GM12878 (cell line): ENCODE measurements at regions of chr5 and their contacts with region 1.

Region 1: GRCh38 chr5:56328753-56329560 is 95.8 kb upstream of the ANKRD55 start:
- DNase-seq: peak; percentile 78
- ATAC-seq: peak; percentile 82
- H3K4me3 ChIP-seq: peak overlapping the region; percentile 14; the same call in 1 of the 2 replicates
- H3K27ac ChIP-seq: peak overlapping the region; percentile 59
- H3K4me1 ChIP-seq: peaks cover 21% of the 10 kb centered on the region
- H3K27me3 ChIP-seq: no peaks in the 10 kb centered on the region
- CTCF ChIP-seq: no peak
- EP300 ChIP-seq: peak in 1 of 2 experiments; percentile 70; a peak in 1 of 4 replicates
- POLR2A ChIP-seq: no peak
- RAD21 ChIP-seq: no peak

Region 2: DNA sequence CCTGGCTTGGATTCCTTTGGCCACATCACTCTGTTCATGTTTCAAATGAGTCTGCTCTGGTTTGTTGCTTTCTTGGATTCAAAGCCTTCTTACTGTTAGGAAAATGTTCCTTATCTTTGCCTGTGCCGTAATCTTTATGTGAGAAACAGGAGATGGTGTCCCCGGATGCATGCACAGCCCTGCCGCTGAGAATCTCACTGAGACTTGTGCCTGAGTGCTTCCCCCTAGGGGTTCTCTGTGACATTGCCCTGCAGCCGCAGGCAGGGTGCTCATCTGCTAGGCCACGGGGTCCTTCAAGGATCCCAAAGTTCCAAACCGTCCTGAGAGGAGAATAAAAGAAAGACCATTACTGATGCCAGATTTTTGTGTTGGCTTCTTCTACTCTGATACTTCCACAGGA is 14.4 kb before region 1 on chr5:
- CTCF ChIA-PET with region 1: interaction called, 45 read pairs
- POLR2A ChIA-PET with region 1: interaction called, 7 read pairs
- RAD21 ChIA-PET with region 1: interaction called, 33 read pairs
- SMC1A ChIA-PET with region 1: interaction called, 59 read pairs
- in situ Hi-C with region 1: no loop called
- intact Hi-C with region 1: no loop called
- DNase-seq: no peak
- ATAC-seq: peak; percentile 85
- H3K4me3 ChIP-seq: no peak overlapping the region
- H3K27ac ChIP-seq: no peak overlapping the region
- H3K4me1 ChIP-seq: peaks cover 15% of the 10 kb centered on the region
- H3K27me3 ChIP-seq: no peaks in the 10 kb centered on the region
- CTCF ChIP-seq: peak; percentile 62 to 96 (median 91)
- EP300 ChIP-seq: no peak
- POLR2A ChIP-seq: no peak
- RAD21 ChIP-seq: peak; percentile 64

Region 3: GRCh38 chr5:56340196-56340980 is 11.4 kb after region 1 on chr5:
- CTCF ChIA-PET with region 1: interaction called, 10 read pairs
- POLR2A ChIA-PET with region 1: no interaction called
- RAD21 ChIA-PET with region 1: no interaction called
- SMC1A ChIA-PET with region 1: interaction called, 11 read pairs
- in situ Hi-C with region 1: no loop called
- intact Hi-C with region 1: no loop called
- DNase-seq: no peak
- ATAC-seq: no peak
- H3K4me3 ChIP-seq: no peak overlapping the region
- H3K27ac ChIP-seq: no peak overlapping the region
- H3K4me1 ChIP-seq: no peaks in the 10 kb centered on the region
- H3K27me3 ChIP-seq: no peaks in the 10 kb centered on the region
- CTCF ChIP-seq: no peak
- EP300 ChIP-seq: no peak
- POLR2A ChIP-seq: no peak
- RAD21 ChIP-seq: no peak

Region 4: GRCh38 chr5:56415356-56415765 is 86.4 kb after region 1 on chr5:
- CTCF ChIA-PET with region 1: interaction called, 9 read pairs
- POLR2A ChIA-PET with region 1: interaction called, 7 read pairs
- RAD21 ChIA-PET with region 1: interaction called, 111 read pairs
- SMC1A ChIA-PET with region 1: interaction called, 57 read pairs
- in situ Hi-C with region 1: no loop called
- intact Hi-C with region 1: loop called (anchors 1 kb)
- DNase-seq: peak; percentile 92
- ATAC-seq: peak; percentile 84
- H3K4me3 ChIP-seq: peak overlapping the region; percentile 48; the same call in 1 of the 2 replicates
- H3K27ac ChIP-seq: peak overlapping the region; percentile 79
- H3K4me1 ChIP-seq: peaks cover 40% of the 10 kb centered on the region
- H3K27me3 ChIP-seq: no peaks in the 10 kb centered on the region
- CTCF ChIP-seq: no peak
- EP300 ChIP-seq: peak in 1 of 2 experiments; percentile 39; a peak in 2 of 4 replicates
- POLR2A ChIP-seq: 0 out of 2 replicates have a peak, but pooled peaks have one; percentile 26
- RAD21 ChIP-seq: 0 out of 2 replicates have a peak, but pooled peaks have one; percentile 10

Region 5: DNA sequence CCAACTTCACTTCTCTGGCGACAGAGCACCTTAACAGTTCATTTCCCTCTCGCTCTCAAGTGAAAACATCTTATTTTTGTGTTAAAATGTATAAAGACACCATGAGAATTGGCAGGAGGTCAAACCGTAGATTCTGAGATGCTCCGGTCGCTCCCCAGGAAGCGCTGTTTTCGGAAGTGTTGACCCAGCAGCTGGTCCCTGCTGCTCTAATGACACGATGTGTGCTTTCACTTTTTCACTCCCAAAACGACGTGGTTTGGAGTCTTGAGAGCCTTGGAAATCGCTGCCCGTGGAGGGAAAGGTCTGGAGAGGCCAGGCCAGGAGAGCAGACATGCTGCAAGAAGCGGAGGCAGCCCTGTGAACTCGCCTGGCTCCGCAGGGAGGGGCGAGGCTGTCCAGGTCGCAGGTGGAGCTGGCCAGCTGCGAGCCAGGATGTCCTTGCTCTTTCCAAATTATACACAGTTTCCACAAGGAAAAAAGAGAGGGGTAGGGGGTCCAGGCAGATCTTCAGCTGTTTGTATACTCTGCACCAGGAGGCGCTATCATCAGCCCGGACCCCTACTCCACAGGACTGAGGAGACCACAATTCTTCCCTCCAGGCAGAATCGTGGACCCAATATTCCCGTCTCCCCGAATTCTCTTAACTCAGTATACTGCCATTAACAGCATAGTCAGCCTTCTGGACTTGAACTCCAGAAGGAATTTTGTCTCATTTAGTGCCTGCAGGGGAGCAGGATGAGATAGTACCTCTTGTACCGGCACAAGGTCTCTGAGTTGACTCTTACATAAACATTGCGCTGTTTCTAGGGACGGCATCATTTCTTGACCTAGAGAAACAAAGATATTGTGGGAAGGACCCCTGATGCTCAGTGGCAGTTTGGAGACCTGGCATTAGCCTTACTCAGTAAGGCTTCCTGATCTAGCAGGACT is 152.7 kb after region 1 on chr5:
- CTCF ChIA-PET with region 1: no interaction called
- POLR2A ChIA-PET with region 1: no interaction called
- RAD21 ChIA-PET with region 1: interaction called, 16 read pairs
- SMC1A ChIA-PET with region 1: interaction called, 5 read pairs
- in situ Hi-C with region 1: no loop called
- intact Hi-C with region 1: loop called (anchors 1 kb)
- DNase-seq: peak; percentile 23
- ATAC-seq: peak; percentile 58
- H3K4me3 ChIP-seq: peak overlapping the region; percentile 87
- H3K27ac ChIP-seq: peak overlapping the region; percentile 4; the same call in 1 of the 2 replicates
- H3K4me1 ChIP-seq: peaks cover 24% of the 10 kb centered on the region
- H3K27me3 ChIP-seq: no peaks in the 10 kb centered on the region
- CTCF ChIP-seq: peak; percentile 15 to 31 (median 26); a peak in 2 of 6 replicates
- EP300 ChIP-seq: no peak
- POLR2A ChIP-seq: no peak
- RAD21 ChIP-seq: peak; percentile 32; the same call in 1 of the 2 replicates

Region 6: GRCh38 chr5:56681346-56681745 is 352.4 kb after region 1 on chr5:
- CTCF ChIA-PET with region 1: interaction called, 3 read pairs
- POLR2A ChIA-PET with region 1: no interaction called
- RAD21 ChIA-PET with region 1: interaction called, 6 read pairs
- SMC1A ChIA-PET with region 1: interaction called, 3 read pairs
- in situ Hi-C with region 1: no loop called
- intact Hi-C with region 1: loop called (anchors 5 kb)
- DNase-seq: no peak
- ATAC-seq: no peak
- H3K4me3 ChIP-seq: no peak overlapping the region
- H3K27ac ChIP-seq: no peak overlapping the region
- H3K4me1 ChIP-seq: peaks cover 14% of the 10 kb centered on the region
- H3K27me3 ChIP-seq: no peaks in the 10 kb centered on the region
- CTCF ChIP-seq: no peak
- EP300 ChIP-seq: no peak
- POLR2A ChIP-seq: no peak
- RAD21 ChIP-seq: no peak